ENCODE measurements at regions of chr11 and their contacts with region 1.

Region 1: DNA sequence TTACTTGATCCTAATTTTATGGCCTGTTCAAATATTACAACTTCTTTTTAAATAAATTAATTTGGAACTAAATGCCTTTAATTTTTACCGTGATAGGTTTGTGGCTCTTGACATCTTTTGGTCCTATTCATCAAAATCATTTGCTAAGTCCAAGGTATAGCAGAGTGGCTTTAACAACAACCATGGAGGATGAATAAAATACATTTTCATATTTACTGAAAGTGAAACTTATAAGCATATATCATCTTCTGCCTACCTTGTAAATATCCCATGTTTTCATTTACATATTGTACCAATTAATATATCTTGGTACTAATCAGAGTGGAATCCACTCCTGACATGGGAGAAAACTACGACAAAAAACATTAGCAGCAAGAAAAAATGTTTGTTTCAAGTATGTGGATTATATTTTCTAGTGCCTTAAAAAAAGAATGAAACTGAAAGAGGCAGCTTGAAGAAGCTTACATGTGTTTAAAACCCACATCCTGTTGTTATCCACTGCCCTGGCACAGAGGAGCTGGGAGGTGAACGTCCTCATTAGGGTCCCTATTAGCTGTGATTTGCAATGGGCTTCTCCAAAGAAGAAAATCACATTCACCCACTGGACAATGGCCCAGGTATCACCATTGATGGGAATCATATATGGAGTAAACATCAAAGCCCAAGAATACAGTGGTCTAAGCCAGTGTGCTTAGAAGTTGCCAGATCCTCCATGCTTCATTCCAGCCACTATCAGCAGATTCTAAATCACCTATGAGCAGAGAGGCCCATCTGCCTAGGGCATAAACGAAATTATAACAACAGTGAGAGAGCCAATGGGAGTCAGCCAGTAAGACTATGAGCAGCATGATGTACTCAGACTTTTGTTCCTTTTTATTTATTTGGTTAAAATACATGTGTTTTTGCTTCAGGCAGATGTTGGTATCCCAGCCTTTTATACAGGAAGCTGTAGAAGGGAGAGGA is 84.7 kb downstream of the MAML2 start:
- DNase-seq: no peak
- H3K4me3 ChIP-seq: peak overlapping the region in 2 of 3 experiments; percentile 4 to 30
- H3K27ac ChIP-seq: peak overlapping the region; percentile 53
- H3K4me1 ChIP-seq: peaks cover 54% of the 10 kb centered on the region
- H3K27me3 ChIP-seq: no peaks in the 10 kb centered on the region
- CTCF ChIP-seq: no peak

Region 2: DNA sequence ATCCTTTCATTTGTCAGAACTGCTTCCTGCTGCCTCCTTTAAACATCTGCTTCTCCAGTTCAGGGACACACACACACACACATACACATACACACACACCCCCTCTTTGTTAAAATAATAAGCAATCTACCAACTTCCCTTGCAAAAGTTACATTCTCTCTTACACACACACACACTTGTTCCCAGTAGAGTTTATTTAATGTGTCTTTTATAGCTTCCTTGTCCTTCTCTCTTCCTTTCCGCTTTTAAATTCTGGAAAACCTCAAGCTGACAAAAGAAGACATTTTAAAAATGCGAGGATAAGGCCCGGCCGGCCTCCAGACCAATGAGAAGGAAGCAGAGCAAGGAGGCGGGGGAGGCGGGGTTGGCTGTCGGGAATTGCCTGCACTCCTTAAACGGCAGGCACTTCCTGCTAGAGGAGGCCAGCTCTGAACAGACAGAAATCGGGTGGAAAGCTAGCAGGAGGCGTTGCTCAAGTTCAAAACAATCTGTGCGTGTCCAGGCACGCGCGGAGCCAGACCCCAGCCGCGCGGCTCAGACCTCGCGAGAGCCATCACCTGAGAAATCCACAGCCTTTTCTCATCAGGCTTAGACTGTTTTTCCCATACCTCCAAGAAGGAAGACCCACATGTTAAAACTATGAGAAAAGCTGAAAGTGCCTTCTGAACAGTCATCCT is 15.1 kb before region 1 on chr11:
- CTCF ChIA-PET with region 1: interaction called, 4 read pairs
- dilution Hi-C with region 1: no loop called
- in situ Hi-C with region 1: no loop called
- intact Hi-C with region 1: loop called (anchors 2 kb)
- DNase-seq: peak; percentile 92
- H3K4me3 ChIP-seq: peak overlapping the region; percentile 25 to 31 (median 30)
- H3K27ac ChIP-seq: peak overlapping the region; percentile 74
- H3K4me1 ChIP-seq: peaks cover 40% of the 10 kb centered on the region
- H3K27me3 ChIP-seq: no peaks in the 10 kb centered on the region
- CTCF ChIP-seq: no peak

Region 3: GRCh38 chr11:96288915-96289314 is 30.7 kb after region 1 on chr11:
- CTCF ChIA-PET with region 1: no interaction called
- dilution Hi-C with region 1: no loop called
- in situ Hi-C with region 1: no loop called
- intact Hi-C with region 1: no loop called
- DNase-seq: no peak
- H3K4me3 ChIP-seq: no peak overlapping the region
- H3K27ac ChIP-seq: no peak overlapping the region
- H3K4me1 ChIP-seq: peaks cover 5% of the 10 kb centered on the region
- H3K27me3 ChIP-seq: no peaks in the 10 kb centered on the region
- CTCF ChIP-seq: no peak

Region 4: DNA sequence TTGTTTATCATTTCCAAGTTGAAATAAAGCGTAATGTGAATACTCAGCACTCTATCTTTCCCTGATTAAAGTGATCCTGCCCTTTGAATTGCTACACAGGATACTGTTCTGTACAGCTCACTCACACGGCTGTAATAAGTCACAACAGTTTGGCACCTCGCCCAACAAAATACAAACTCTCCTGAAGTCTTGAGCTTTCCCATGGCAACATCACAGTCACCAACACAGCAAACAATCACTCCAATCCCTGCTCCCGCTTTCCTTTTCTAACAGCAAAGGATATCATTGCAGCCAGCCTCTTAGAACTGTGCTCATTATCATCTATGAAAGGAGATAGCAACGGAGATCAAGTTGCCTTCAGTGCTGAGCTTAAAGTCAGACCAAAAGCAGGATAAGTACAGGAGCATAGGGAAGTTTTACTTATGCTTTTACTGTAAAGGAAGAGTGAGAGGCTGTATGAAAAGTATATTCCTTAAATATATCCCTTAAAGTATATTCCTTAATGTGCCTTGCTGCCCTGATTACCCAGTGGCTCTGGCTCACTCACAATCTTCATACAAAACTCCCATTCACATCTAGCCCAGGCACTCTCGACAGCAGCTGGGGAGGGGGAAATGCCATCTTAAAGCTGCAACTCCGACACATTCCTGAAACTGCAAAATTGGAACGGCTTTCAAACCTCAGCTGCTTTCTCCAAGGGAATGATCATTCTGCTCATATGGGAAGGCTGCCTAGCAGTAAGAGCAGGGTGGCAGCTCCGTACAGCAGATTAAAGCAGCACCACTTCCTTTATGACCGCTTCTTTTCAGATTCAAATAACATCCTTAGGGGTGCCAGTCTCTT is 48.9 kb after region 1 on chr11:
- CTCF ChIA-PET with region 1: no interaction called
- dilution Hi-C with region 1: no loop called
- in situ Hi-C with region 1: no loop called
- intact Hi-C with region 1: loop called (anchors 1 kb)
- DNase-seq: peak; percentile 99
- H3K4me3 ChIP-seq: peak overlapping the region; percentile 12 to 26 (median 13)
- H3K27ac ChIP-seq: peak overlapping the region; percentile 99
- H3K4me1 ChIP-seq: peaks cover 76% of the 10 kb centered on the region
- H3K27me3 ChIP-seq: no peaks in the 10 kb centered on the region
- CTCF ChIP-seq: no peak